ENCODE measurements at regions of chr20 and their contacts with region 1.

Region 1: GRCh38 chr20:17431621-17432364 is 99.4 kb downstream of the BFSP1 start:
- DNase-seq: no peak
- H3K4me3 ChIP-seq: no peak overlapping the region
- H3K27ac ChIP-seq: no peak overlapping the region
- H3K4me1 ChIP-seq: no peaks in the 10 kb centered on the region
- H3K27me3 ChIP-seq: peaks cover 0 to 38% (median 0%) of the 10 kb centered on the region in 4 donors
- CTCF ChIP-seq: peak; percentile 76 to 88 (median 83)
- EP300 ChIP-seq: no peak
- POLR2A ChIP-seq: no peak

Region 2: GRCh38 chr20:16801919-16802911 is 629.6 kb before region 1 on chr20:
- intact Hi-C with region 1: loop called (anchors 2 kb)
- DNase-seq: no peak
- H3K4me3 ChIP-seq: peak overlapping the region in 1 of 4 donors; percentile 6
- H3K27ac ChIP-seq: no peak overlapping the region
- H3K4me1 ChIP-seq: no peaks in the 10 kb centered on the region
- H3K27me3 ChIP-seq: peaks cover 0 to 52% (median 2%) of the 10 kb centered on the region in 4 donors
- CTCF ChIP-seq: peak; percentile 77 to 90 (median 77)
- EP300 ChIP-seq: no peak
- POLR2A ChIP-seq: no peak

Region 3: GRCh38 chr20:17129089-17129488 is 302.7 kb before region 1 on chr20:
- intact Hi-C with region 1: no loop called
- DNase-seq: no peak
- H3K4me3 ChIP-seq: no peak overlapping the region
- H3K27ac ChIP-seq: no peak overlapping the region
- H3K4me1 ChIP-seq: no peaks in the 10 kb centered on the region
- H3K27me3 ChIP-seq: no peaks in the 10 kb centered on the region
- CTCF ChIP-seq: no peak
- EP300 ChIP-seq: no peak
- POLR2A ChIP-seq: no peak